Mammary epithelial cell (primary cell): ENCODE measurements at regions of chr18 and their contacts with region 1.

Region 1: DNA sequence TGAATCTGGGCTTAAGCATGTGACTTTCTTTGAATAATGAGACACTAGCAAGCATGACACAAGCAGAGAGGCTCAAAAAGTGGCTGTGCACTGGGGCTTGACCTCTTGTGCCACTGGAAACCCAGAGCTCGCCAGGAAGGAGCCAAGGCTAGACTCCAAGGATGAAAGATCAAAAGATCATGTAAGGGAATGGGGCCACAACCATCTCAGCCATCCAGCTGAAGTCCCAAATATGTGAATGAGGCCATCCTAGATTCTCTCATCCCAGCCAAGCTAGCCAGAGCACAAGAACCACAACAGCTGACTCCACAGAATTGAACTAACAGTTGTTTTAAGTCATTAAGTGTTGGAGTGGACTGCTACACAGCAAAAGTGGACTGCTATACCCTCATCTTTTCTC is 288.1 kb downstream of the CCDC178 start:
- DNase-seq: no peak
- H3K4me3 ChIP-seq: no peak overlapping the region
- H3K27ac ChIP-seq: no peak overlapping the region
- H3K4me1 ChIP-seq: no peaks in the 10 kb centered on the region
- H3K27me3 ChIP-seq: no peaks in the 10 kb centered on the region
- CTCF ChIP-seq: no peak

Region 2: DNA sequence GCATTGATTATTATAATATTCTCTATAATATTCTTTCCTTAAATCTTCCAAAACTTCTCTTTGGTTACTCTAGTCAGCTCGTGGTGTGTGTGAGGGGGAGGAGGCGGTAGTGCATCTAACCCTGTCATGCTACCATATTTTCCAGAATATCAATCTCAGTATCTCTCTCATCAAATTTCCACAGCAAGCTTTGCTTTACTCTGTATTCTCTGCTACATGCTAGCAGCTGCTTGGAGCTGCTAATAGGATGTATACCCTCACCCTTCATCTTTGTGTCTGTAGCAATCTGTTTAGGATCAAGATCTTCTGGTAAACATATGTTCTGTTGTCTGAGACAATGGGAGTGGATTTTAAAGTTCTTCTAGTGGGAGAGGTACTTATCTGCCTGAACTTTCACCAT is 75.8 kb before region 1 on chr18:
- CTCF ChIA-PET with region 1: no interaction called
- dilution Hi-C with region 1: loop called (anchors 5 kb)
- in situ Hi-C with region 1: no loop called
- intact Hi-C with region 1: no loop called
- DNase-seq: no peak
- H3K4me3 ChIP-seq: no peak overlapping the region
- H3K27ac ChIP-seq: no peak overlapping the region
- H3K4me1 ChIP-seq: no peaks in the 10 kb centered on the region
- H3K27me3 ChIP-seq: no peaks in the 10 kb centered on the region
- CTCF ChIP-seq: no peak